Heart left ventricle (tissue), 16 donors: ENCODE measurements at regions of chr17 and their contacts with region 1.

Region 1: GRCh38 chr17:75764711-75765421 is at the start of gene GALK1:
- DNase-seq: peak; percentile 79 to 88 (median 82)
- ATAC-seq: peak; percentile 56 to 92 (median 86)
- H3K4me3 ChIP-seq: peak within 1 kb of the TSS; percentile 54 to 91 (median 74)
- H3K27ac ChIP-seq: peak within 1 kb of the TSS; percentile 58 to 98 (median 87)
- H3K4me1 ChIP-seq: peaks cover 0 to 22% (median 14%) of the 10 kb centered on the region in 12 donors
- H3K27me3 ChIP-seq: no peaks in the 10 kb centered on the region
- CTCF ChIP-seq: peak; percentile 25 to 84 (median 54)
- POLR2A ChIP-seq: peak in 1 of 2 donors; percentile 64
- total RNA-seq, gene GALK1: 9.6 to 30.6 (median 16.5) TPM

Region 2: DNA sequence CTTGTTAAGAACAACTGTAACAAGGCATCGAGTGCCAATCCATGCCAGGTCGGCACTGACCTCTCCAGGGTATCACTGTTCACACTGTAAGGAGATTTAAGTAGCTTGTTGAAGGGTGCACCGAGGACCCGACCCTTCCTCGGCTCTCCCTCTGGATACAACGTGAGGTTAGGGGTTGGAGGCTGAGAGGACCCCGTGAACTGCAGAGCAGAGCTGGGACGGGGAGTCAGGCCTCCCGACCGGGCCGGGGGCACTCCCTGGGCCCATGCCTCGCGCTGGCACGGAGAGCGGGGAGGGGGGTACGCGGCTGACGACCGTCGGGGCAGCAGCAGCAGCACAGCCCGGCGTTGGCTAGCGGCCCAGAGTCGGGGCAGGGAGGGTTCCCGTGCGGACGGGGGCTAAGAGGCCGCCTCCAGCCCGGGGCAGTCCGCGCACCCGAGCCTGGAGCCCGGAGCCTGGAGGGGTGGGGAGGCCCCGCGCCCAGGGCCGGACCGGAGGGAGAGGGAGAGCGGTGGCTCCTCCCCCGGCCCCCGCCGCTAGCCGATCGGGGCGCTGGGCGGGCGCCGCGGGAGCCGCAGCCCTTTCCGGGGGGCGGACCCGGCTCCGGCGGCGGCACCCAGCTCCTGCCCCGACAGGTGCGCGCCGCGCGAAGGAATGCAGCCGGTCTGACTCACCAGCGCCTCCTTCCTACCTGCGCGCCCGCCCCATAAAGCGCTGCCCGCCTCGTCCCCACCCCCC is 44.0 kb before region 1 on chr17 and contains the start of gene ITGB4:
- intact Hi-C with region 1: no loop called
- DNase-seq: peak in 2 of 5 donors; percentile 27 to 33
- ATAC-seq: peak in 3 of 4 donors; percentile 46 to 65 (median 53)
- H3K4me3 ChIP-seq: peak within 1 kb of the TSS; percentile 33 to 60 (median 52)
- H3K27ac ChIP-seq: peak within 1 kb of the TSS; percentile 20 to 82 (median 67)
- H3K4me1 ChIP-seq: peaks cover 0 to 26% (median 12%) of the 10 kb centered on the region in 12 donors
- H3K27me3 ChIP-seq: peaks cover 0 to 32% (median 14%) of the 10 kb centered on the region in 9 donors
- CTCF ChIP-seq: no peak
- POLR2A ChIP-seq: no peak
- total RNA-seq, gene ITGB4: 5.1 to 26.8 (median 11.0) TPM

Region 3: DNA sequence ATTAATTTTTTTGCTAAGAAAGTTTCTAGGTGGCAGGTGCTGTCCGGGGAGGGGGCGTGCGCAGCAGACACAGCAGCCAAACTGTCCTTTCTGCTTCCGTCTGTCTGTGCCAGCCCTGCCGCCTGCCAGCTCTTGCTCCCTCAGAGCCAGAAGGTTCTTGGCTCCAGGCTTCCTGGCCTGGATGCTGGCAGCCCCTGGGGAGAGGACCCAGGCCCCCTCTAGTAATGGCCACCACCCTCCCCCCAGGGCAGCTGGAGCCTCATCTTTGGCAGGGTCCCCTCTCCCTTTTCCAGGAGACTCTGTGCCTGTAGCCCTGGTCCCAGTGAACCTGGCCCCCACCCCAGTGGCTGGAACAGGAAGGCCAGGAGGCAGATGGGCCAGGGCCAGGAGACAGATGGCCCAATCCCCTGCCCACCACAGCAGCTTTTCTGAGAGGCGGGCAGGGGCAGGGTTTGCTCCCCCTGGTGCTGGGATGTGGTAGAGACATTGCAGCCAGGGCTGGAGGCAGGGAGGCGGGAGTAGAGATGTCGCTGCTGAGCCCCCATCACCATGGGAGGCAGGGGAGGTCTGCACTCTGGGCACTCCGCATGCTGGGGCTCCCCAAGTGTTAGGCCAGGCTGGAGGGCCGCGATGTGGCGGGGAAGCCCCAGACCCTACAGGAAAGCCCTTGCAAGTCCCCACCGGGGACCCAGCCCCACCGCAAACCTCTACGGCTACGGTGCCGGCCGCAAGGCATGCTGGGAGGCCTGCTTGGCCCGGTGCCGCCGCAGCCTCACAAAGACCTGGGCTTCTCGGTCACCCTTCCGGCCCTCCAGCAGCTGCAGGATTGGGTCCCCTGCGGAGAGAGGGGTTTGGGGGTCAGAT is 62.6 kb after region 1 on chr17:
- intact Hi-C with region 1: loop called in 2 of 10 experiments (anchors 5 to 10 kb)
- DNase-seq: peak; percentile 69 to 88 (median 79)
- ATAC-seq: peak; percentile 25 to 81 (median 67)
- H3K4me3 ChIP-seq: peak overlapping the region in 10 of 12 donors; percentile 27 to 56 (median 40)
- H3K27ac ChIP-seq: peak overlapping the region; percentile 70 to 90 (median 84)
- H3K4me1 ChIP-seq: peaks cover 5 to 37% (median 23%) of the 10 kb centered on the region in 12 donors
- H3K27me3 ChIP-seq: no peaks in the 10 kb centered on the region
- CTCF ChIP-seq: peak; percentile 59 to 83 (median 68)
- POLR2A ChIP-seq: no peak

Region 4: DNA sequence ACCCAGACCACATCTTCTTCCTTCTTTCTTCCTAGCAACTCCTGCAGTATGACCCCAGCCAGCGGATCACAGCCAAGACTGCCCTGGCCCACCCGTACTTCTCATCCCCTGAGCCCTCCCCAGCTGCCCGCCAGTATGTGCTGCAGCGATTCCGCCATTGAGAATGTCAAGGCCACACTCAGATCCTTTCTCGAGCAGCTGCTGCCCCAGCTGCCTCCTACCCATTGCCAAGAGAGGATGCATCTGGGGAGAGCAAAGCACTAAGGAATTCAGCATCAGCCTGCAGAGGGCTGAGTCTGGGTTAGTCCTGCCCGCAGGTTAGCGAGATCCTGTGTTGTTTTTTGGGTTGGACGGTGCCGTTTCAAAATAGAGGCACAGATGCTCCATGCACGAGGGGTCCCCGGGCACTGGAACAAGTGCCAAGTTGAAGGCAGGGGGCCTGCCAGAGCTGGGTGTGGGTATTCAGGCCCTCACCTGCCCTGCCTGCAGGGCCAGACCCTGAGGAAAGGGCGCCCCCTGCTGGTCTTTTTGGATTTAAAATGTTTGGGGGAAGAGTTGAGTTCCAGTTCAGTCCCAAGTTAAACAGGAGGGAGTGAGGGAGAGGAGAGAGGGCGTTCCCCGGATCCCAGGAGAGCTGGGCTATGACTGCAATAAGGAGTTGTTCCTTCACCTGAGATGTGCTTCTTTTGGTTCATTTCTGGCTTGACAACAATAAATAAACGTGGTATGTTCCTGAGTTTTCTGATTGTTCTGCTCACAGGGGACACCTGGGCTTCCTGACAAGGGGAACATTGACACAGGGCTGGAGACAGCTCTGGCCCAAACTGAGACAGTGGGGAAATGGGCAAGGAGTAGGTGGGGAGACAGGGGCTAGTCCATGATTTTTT is 240.6 kb after region 1 on chr17:
- intact Hi-C with region 1: loop called in 1 of 10 experiments (anchors 1 kb)
- DNase-seq: peak; percentile 71 to 83 (median 76)
- ATAC-seq: peak; percentile 41 to 78 (median 63)
- H3K4me3 ChIP-seq: no peak overlapping the region
- H3K27ac ChIP-seq: peak overlapping the region in 1 of 12 donors; percentile 17
- H3K4me1 ChIP-seq: peaks cover 0 to 7% (median 0%) of the 10 kb centered on the region in 12 donors
- H3K27me3 ChIP-seq: no peaks in the 10 kb centered on the region
- CTCF ChIP-seq: peak; percentile 48 to 81 (median 72)
- POLR2A ChIP-seq: no peak